GM12878 (cell line): ENCODE measurements at regions of chr1 and their contacts with region 1.

Region 1: DNA sequence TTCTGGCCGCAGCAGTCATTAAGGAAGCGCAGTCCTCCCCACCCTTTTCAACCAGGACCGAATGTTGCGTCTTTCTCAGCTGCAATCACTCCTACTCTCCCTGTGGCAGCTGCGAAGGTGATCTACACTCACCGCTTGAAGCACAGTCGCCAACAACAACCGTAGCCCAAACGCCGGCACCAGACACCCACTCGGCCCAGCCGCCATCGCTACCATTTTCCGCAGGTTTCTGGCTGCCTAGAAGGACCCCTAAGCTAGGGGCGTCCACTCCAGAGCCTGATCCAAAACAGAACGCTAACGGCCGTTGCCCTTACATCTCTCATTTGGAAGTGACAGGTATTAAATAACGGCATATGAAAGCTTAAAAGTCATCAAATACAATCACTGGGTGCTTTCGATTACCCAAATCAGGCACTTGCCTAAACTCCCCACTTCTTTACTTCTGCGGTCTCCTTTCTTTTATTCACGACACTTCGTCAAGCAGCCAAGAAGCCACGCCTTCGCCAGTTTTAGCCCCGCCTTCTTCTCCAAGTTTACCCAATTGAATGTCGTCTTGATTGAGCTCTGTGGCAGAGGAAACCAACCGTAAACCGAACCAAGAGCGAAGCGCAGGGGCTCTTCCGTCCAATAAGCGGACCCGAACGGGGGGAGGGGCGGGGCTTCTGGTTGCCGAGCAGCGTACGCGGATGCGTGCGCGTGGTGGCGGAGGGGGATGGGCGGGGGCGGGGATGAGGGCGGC is at the start of gene SELENOF:
- DNase-seq: peak; percentile 100
- ATAC-seq: peak; percentile 88
- H3K4me3 ChIP-seq: peak within 1 kb of the TSS; percentile 100
- H3K27ac ChIP-seq: peak within 1 kb of the TSS; percentile 92
- H3K4me1 ChIP-seq: no peaks in the 10 kb centered on the region
- H3K27me3 ChIP-seq: no peaks in the 10 kb centered on the region
- CTCF ChIP-seq: no peak
- EP300 ChIP-seq: no peak
- POLR2A ChIP-seq: peak; percentile 90
- RAD21 ChIP-seq: no peak
- polyA plus RNA-seq, gene SELENOF: 226 to 254 TPM

Region 2: DNA sequence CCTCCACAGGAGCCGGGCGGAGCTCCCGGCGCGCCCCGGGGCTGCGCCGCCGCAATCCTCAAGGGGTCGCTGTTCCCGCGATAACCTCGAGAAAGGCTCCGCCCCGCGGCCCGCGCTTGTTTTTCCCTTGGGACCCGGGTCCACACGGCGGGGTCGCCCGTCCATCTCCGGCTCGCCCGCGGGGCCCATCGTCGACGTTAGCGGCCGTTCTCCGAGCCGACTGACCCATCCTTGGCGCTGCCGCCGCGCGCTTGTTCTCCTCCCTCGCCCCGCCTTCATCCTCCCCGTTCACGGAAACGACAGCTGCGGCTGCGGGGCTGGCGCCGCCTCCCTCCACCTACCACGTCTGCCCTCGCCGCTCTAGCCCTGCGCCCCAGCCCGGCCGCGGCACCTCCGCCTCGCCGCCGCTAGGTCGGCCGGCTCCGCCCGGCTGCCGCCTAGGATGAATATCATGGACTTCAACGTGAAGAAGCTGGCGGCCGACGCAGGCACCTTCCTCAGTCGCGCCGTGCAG is 209.6 kb before region 1 on chr1 and contains the start of gene SH3GLB1:
- CTCF ChIA-PET with region 1: interaction called, 5 read pairs
- POLR2A ChIA-PET with region 1: interaction called, 3 read pairs
- RAD21 ChIA-PET with region 1: interaction called, 5 read pairs
- SMC1A ChIA-PET with region 1: interaction called, 10 read pairs
- in situ Hi-C with region 1: no loop called
- intact Hi-C with region 1: loop called (anchors 5 kb)
- DNase-seq: peak; percentile 61
- ATAC-seq: peak; percentile 92
- H3K4me3 ChIP-seq: peak within 1 kb of the TSS; percentile 93
- H3K27ac ChIP-seq: peak within 1 kb of the TSS; percentile 94
- H3K4me1 ChIP-seq: no peaks in the 10 kb centered on the region
- H3K27me3 ChIP-seq: no peaks in the 10 kb centered on the region
- CTCF ChIP-seq: peak; percentile 83 to 90 (median 84)
- EP300 ChIP-seq: no peak; a peak in 1 of 4 replicates
- POLR2A ChIP-seq: peak; percentile 90
- RAD21 ChIP-seq: peak; percentile 49
- polyA plus RNA-seq, gene SH3GLB1: 19.8 to 20.2 TPM

Region 3: DNA sequence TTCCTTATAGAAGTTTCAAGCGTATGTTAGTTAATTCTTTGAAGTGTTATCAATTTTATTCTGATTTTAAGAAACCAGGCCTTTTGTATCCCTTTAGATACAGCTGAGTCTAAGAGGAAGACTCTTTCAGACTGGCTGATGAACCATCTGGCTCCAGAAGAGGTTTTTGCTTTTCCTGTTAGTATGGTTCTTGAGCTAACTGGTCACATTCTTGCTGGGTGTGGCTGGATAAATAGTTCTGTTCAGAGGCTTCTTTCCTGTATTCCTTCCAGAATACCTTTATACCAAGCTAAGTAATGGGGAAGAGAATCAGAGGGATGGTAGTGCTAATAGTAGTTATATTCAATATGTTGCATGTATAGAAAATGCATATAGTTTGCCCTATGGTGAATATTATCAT is 12.8 kb after region 1 on chr1:
- CTCF ChIA-PET with region 1: interaction called, 6 read pairs
- POLR2A ChIA-PET with region 1: interaction called, 13 read pairs
- RAD21 ChIA-PET with region 1: interaction called, 3 read pairs
- SMC1A ChIA-PET with region 1: interaction called, 17 read pairs
- in situ Hi-C with region 1: no loop called
- intact Hi-C with region 1: no loop called
- DNase-seq: no peak
- ATAC-seq: no peak
- H3K4me3 ChIP-seq: no peak overlapping the region
- H3K27ac ChIP-seq: no peak overlapping the region
- H3K4me1 ChIP-seq: no peaks in the 10 kb centered on the region
- H3K27me3 ChIP-seq: no peaks in the 10 kb centered on the region
- CTCF ChIP-seq: no peak
- EP300 ChIP-seq: no peak
- POLR2A ChIP-seq: no peak
- RAD21 ChIP-seq: no peak

Region 4: DNA sequence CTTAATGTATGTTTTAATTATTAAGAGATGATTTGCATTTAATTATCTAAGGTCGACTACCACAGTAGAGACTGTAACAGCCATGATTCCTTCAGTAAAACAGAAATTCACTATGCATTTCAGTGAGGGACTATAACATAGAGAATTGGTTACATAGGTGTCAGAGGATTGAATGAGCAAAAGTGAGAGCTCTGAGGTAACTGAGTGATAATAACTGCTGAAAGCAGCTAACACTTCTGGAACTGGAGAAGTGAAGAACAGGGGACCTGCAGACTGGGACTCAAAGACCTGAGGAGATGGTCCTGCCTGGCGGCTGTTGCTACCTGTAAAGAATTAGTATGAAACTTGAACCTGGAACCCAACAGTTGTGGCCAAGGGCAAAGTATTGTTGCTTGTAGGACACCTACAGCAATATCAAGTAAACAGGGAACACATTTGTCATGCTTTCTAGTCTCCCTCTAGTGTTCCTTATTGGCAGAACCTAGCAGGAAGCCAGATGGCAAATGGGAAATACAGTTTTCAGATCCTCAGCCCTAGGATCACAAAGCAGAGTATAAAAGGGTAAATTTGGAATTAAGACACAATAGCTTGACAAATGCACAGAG is 111.0 kb after region 1 on chr1:
- CTCF ChIA-PET with region 1: no interaction called
- POLR2A ChIA-PET with region 1: no interaction called
- RAD21 ChIA-PET with region 1: interaction called, 3 read pairs
- SMC1A ChIA-PET with region 1: interaction called, 5 read pairs
- in situ Hi-C with region 1: no loop called
- intact Hi-C with region 1: loop called (anchors 5 kb)
- DNase-seq: no peak
- ATAC-seq: peak; percentile 92
- H3K4me3 ChIP-seq: no peak overlapping the region
- H3K27ac ChIP-seq: no peak overlapping the region
- H3K4me1 ChIP-seq: peaks cover 5% of the 10 kb centered on the region; the same call in 1 of the 2 replicates
- H3K27me3 ChIP-seq: no peaks in the 10 kb centered on the region
- CTCF ChIP-seq: peak; percentile 35 to 53 (median 51); a peak in 4 of 6 replicates
- EP300 ChIP-seq: no peak
- POLR2A ChIP-seq: no peak
- RAD21 ChIP-seq: peak; percentile 53

Region 5: DNA sequence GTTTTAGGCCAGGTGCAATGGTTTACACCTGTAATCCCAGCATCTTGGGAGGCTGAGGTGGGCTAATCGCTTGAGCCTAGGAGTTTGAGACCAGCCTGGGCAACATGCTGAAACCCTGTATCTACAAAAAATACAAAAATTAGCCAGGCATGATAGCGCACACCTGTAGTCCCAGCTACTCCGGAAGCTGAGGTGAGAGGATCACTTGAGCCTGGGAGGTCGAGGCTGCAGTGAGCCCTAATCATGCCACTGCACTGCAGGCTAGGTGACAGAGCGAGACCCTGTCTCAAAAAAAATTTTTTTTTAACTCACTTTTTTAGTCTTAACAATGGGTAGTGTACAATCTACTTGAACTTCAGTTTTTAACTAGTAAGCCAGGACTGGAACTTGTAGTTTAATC is 137.9 kb after region 1 on chr1:
- CTCF ChIA-PET with region 1: interaction called, 4 read pairs
- POLR2A ChIA-PET with region 1: interaction called, 34 read pairs
- RAD21 ChIA-PET with region 1: interaction called, 27 read pairs
- SMC1A ChIA-PET with region 1: interaction called, 23 read pairs
- in situ Hi-C with region 1: loop called (anchors 10 kb)
- intact Hi-C with region 1: loop called (anchors 2 kb)
- DNase-seq: no peak
- ATAC-seq: peak; percentile 76
- H3K4me3 ChIP-seq: peak overlapping the region; percentile 1; the same call in 1 of the 2 replicates
- H3K27ac ChIP-seq: no peak overlapping the region; the same call in 1 of the 2 replicates
- H3K4me1 ChIP-seq: peaks cover 8% of the 10 kb centered on the region; the same call in 1 of the 2 replicates
- H3K27me3 ChIP-seq: no peaks in the 10 kb centered on the region
- CTCF ChIP-seq: no peak
- EP300 ChIP-seq: no peak
- POLR2A ChIP-seq: no peak
- RAD21 ChIP-seq: no peak

Region 6: GRCh38 chr1:87140851-87141555 is 226.9 kb after region 1 on chr1:
- CTCF ChIA-PET with region 1: no interaction called
- POLR2A ChIA-PET with region 1: no interaction called
- RAD21 ChIA-PET with region 1: no interaction called
- SMC1A ChIA-PET with region 1: no interaction called
- in situ Hi-C with region 1: no loop called
- intact Hi-C with region 1: no loop called
- DNase-seq: no peak
- ATAC-seq: no peak
- H3K4me3 ChIP-seq: no peak overlapping the region
- H3K27ac ChIP-seq: no peak overlapping the region
- H3K4me1 ChIP-seq: no peaks in the 10 kb centered on the region
- H3K27me3 ChIP-seq: no peaks in the 10 kb centered on the region; a peak in 1 of 4 replicates
- CTCF ChIP-seq: no peak
- EP300 ChIP-seq: no peak
- POLR2A ChIP-seq: no peak
- RAD21 ChIP-seq: no peak

Region 7: DNA sequence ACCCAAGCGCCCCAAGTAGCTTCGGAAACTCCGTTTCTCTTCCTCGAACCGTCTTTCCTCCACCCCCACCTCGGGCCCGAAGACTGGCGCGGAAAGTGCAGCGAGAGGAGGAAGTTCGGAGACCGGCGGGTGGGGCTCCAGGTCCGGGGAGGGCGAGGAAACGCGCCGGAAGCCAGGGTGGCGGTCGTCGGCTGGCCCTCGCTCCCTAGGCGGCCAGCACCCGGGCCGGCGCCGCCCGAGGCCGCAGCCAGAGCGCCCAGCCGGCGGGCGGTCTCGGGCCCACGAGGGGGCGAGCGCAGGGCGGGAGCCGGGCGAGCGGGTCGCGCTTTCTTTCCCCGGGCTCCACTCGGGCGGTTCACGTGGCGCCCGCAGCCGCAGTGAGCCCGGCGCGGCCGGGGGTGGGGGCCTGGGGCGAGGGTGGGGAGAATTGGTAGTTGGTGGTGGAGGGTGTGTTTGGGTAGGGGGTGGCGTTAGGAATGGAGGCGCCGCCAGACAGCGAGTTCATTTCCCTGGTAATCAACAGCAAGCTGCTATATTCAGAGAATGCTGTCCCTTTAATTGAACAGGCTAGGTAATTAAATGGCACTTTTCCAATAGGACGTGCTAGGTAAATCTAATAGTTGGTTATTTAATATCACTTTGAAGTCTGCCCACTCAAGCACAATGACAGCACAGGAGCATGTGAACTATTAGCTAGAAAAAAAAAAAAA is 421.3 kb after region 1 on chr1:
- CTCF ChIA-PET with region 1: no interaction called
- POLR2A ChIA-PET with region 1: interaction called, 3 read pairs
- RAD21 ChIA-PET with region 1: no interaction called
- SMC1A ChIA-PET with region 1: no interaction called
- in situ Hi-C with region 1: no loop called
- intact Hi-C with region 1: loop called (anchors 10 kb)
- DNase-seq: no peak
- ATAC-seq: peak; percentile 65
- H3K4me3 ChIP-seq: peak overlapping the region; percentile 75
- H3K27ac ChIP-seq: peak overlapping the region; percentile 53
- H3K4me1 ChIP-seq: peaks cover 14% of the 10 kb centered on the region
- H3K27me3 ChIP-seq: no peaks in the 10 kb centered on the region
- CTCF ChIP-seq: peak; percentile 9 to 44 (median 33); a peak in 5 of 6 replicates
- EP300 ChIP-seq: no peak
- POLR2A ChIP-seq: peak; percentile 79
- RAD21 ChIP-seq: no peak; the same call in 1 of the 2 replicates